ENCODE measurements at regions of chr7 and their contacts with region 1.

Region 1: DNA sequence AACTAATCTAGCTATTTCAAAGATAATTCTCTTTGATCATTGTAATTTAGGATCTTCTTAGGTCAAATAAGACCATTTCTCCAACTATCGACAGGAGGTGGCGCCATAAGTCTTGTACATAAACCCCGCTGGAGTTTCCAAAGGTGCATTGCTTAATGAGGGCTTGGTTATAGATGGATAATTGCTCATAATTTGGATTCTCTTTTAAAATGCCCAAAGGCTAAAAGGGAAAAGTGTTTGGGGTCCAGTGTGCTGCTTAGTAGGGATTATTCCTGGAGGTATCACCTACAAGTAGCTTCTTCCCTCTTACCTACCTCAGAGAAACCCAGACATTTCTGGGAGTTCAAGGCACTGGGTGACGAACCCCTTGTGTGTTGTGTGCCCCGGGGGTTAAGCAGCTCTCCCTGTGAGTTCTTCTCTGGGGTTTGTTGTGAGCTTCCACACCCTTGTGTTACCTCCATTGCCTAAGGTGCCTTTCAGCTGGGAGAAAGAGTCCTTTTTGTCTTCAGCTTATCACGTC is 75.2 kb downstream of the PAXIP1 start:
- DNase-seq: peak; percentile 91
- H3K4me3 Mint-ChIP-seq: peak overlapping the region; percentile 95
- H3K27ac Mint-ChIP-seq: peak overlapping the region; percentile 96
- H3K4me1 Mint-ChIP-seq: peaks cover 28% of the 10 kb centered on the region
- H3K27me3 Mint-ChIP-seq: no peaks in the 10 kb centered on the region

Region 2: DNA sequence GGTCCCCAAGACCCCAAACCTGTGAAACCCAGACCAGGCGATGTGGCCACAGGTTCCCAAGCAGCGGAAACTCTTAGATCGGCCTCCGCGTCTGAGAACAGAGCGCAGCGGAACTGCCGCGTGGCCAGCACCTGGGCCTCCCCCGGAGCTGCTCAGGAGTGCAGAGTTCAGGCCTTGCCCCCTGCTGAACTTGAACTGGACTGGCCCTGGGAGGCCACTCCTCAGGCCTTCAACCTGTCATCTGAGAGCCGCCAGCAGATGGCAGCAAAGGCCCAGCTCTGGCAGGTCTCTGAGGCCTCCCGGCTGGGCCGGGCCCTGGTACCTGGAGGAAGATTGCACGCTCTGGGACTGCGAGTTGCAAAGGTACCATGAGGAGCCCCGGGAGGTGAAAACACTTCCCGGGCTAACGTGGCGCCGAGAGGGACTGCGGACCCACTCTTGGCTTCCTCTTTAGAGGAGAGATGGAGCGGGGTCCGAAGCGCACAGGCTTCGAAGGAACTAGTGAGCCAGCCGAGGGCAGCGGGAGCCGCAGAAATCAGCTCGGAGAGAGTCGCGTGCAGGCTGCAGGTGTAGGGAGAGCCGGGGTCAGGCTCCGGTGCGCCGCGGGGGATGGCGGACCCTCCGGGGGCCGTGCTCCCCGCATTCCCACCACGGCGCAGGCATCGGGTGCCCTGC is 13.9 kb before region 1 on chr7:
- CTCF ChIA-PET with region 1: interaction called, 54 read pairs
- intact Hi-C with region 1: loop called (anchors 1 kb)
- DNase-seq: peak; percentile 92
- H3K4me3 Mint-ChIP-seq: peak overlapping the region; percentile 66
- H3K27ac Mint-ChIP-seq: no peak overlapping the region
- H3K4me1 Mint-ChIP-seq: peaks cover 6% of the 10 kb centered on the region
- H3K27me3 Mint-ChIP-seq: peaks cover 16% of the 10 kb centered on the region

Region 3: DNA sequence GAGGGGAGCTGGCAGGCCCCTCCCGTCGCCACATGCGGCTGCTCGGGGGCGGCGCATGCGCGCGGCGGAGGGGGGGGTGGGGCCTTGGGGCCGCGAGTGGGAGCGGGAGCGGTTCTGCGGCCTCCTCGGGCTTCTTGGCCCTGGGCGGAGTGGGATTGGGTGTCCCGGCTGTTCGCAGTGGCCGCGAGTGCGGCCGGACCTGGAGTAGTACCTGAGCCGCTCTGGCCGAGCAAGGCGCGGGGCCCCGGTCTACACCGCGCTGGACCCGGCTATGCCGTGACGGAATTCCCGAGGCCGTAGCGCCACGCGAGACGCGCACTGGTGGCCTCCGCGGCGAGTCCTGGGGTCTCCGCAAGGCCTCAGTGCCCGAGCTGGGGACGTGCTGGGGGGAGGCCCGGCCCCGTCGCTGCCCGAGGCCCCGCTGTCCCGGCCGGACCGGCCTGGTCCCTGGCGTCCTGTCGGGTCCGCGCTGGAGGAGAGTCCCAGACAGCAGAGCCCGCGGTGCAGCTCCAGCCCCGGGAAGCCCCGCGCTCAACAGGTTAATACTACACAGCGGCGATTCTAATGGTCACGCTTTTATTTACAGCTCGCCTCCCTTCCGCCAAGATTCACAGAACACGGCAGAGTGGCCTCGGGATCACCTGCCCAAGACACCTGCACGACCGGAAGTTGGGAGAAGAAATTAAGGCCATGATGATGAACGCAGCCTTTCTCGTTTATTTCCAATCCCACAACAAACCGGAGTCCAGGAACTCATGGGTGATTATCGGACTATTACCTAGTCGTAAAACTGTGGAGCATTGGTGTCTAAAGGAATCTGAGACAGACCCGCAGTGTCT is 75.9 kb after region 1 on chr7:
- CTCF ChIA-PET with region 1: interaction called, 17 read pairs
- intact Hi-C with region 1: loop called (anchors 1 kb)
- DNase-seq: peak; percentile 75
- H3K4me3 Mint-ChIP-seq: peak overlapping the region; percentile 92
- H3K27ac Mint-ChIP-seq: peak overlapping the region; percentile 89
- H3K4me1 Mint-ChIP-seq: peaks cover 7% of the 10 kb centered on the region
- H3K27me3 Mint-ChIP-seq: no peaks in the 10 kb centered on the region

Region 4: DNA sequence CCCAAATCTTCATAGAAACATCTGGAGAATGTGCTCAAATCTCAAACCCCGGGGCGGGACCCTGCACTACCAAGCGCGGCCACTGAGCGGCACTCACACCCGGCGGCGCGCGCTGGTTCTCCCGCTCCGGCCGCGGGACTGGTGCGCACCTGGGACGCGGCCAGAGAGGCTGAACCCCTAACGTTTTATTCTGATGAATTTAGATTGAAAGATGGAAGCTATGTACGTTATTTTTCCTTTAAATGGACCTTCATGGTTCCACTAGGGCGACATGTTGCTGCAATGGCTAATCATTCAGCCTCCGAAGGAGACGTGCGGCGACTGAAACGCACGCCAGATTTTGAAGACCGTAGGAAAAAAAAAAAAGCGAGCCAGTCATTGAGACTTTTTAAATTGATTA is 263.0 kb after region 1 on chr7:
- CTCF ChIA-PET with region 1: no interaction called
- intact Hi-C with region 1: loop called (anchors 5 kb)
- DNase-seq: peak; percentile 69
- H3K4me3 Mint-ChIP-seq: no peak overlapping the region
- H3K27ac Mint-ChIP-seq: no peak overlapping the region
- H3K4me1 Mint-ChIP-seq: peaks cover 11% of the 10 kb centered on the region
- H3K27me3 Mint-ChIP-seq: peaks cover 13% of the 10 kb centered on the region

Region 5: DNA sequence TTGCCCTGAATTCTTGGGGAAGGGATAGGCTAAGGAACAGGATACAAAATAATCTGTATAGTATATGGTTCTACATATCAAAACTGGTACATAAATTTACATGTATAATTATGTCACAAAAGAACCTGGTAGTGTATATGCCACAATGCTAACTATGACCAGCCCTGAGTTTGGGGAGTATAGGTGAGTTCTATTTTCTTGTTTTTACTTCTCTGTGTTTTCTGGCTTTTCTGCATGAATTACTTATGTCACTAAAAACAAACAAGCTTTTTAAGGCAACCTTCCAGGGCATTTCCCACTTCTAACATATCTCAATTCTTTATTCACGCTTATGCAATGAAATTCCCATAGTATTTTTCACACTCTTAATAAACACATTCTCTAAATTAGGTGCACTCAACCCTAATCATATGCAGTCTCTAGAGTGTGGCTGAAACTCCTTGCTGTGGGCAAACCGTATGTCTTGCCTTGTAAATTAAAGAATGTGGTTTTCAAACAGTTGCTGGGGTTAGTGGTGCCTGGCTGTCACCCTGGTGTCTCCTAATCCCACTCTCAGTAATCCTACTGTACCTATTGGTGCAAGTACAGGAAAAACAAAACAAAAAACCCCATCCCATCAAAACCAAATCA is 356.0 kb after region 1 on chr7:
- CTCF ChIA-PET with region 1: no interaction called
- intact Hi-C with region 1: loop called (anchors 5 kb)
- DNase-seq: peak; percentile 60
- H3K4me3 Mint-ChIP-seq: no peak overlapping the region
- H3K27ac Mint-ChIP-seq: no peak overlapping the region
- H3K4me1 Mint-ChIP-seq: peaks cover 56% of the 10 kb centered on the region
- H3K27me3 Mint-ChIP-seq: peaks cover 3% of the 10 kb centered on the region

Region 6: DNA sequence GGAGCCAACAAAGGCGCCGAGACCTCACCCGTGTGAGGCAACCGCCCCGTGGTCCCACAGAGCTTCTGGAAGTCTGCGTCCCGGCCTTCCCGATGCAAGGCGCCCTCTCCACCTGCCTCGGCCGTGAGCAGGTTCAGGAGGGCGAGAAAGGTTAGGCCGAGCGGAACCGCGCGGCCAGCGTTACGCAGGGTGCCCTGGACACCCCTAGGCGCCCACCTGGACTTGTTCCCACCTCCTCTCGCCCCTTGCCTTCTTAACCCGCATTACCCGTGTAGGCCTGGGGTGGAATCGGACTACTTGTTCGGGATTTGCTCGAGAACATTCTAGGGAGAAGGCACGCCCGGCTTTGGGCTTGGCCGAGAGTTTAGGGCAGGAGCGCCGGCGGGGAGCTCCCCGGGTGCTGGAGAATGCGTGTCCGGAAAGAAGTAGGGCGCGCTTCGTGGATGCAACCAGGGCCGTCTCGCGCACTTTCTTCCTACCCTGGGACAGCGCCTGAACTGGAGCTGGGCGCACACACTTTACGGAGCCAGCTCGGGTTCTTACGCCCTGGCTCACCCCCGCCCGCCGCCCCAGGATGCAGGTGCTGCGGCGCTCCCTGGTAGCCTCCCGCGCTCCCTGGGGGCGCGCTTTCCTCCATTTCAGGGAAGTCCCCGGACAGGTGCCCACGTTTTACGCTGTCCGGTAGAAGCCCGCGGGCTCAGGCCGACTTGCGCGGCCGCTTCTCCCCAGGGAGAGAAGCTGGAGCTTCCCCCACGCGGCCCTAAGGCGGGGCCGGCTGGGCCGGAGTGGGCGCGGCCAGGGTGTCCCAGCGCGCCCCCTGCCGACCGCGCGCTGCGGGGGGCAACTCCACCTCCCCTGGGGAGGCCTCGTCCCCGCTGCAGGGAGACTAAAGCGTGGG is 444.4 kb after region 1 on chr7:
- CTCF ChIA-PET with region 1: interaction called, 5 read pairs
- intact Hi-C with region 1: loop called (anchors 2 kb)
- DNase-seq: no peak
- H3K4me3 Mint-ChIP-seq: no peak overlapping the region
- H3K27ac Mint-ChIP-seq: no peak overlapping the region
- H3K4me1 Mint-ChIP-seq: peaks cover 31% of the 10 kb centered on the region
- H3K27me3 Mint-ChIP-seq: peaks cover 66% of the 10 kb centered on the region

Region 7: GRCh38 chr7:155763691-155764437 is 836.2 kb after region 1 on chr7:
- CTCF ChIA-PET with region 1: interaction called, 4 read pairs
- intact Hi-C with region 1: loop called (anchors 2 kb)
- DNase-seq: peak; percentile 82
- H3K4me3 Mint-ChIP-seq: peak overlapping the region; percentile 70
- H3K27ac Mint-ChIP-seq: peak overlapping the region; percentile 95
- H3K4me1 Mint-ChIP-seq: peaks cover 42% of the 10 kb centered on the region
- H3K27me3 Mint-ChIP-seq: no peaks in the 10 kb centered on the region

Measured in activated naive CD4-positive, alpha-beta T cell treated with anti-CD3 and anti-CD28 coated beads for 36 hours (primary cell).